H1 (cell line): ENCODE measurements at regions of chr13 and their contacts with region 1.

Region 1: DNA sequence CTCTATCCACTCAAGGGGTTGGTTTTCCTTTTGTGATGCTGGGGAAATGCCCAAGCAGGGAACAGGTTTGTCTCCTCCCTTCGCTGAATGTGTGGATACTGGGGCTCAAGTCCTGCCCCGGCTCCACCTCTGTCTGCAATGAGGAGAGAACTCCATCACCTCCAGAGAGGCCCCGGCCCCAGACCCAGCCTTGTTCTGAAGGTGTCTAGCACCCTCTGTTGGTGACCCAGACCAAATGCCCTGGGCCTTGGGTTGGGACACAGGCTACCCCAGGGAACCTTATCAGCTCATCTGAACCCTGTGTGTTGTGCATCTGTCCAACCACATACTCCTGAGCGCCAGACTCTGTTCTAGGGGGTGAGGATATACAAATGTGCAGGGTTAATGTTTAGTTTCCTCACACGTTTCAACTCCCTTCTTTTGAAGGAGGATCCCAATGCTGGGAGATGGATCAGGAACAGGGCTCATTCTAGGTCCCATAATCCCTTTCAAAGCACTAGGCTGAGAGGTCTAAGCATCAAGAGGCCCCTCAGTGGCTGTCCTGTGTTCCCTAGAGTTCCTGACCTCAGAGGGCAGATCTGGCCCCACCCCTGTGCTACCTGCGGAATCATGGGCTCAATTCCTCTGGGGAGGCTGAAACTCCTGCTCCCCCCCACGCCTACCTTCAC is 112.5 kb upstream of the SLC7A1 start:
- DNase-seq: peak; percentile 59 to 79
- H3K4me3 ChIP-seq: no peak overlapping the region
- H3K27ac ChIP-seq: no peak overlapping the region
- H3K4me1 ChIP-seq: peaks cover 0 to 4% (median 3%) of the 10 kb centered on the region in 4 experiments; a peak in 6 of 7 replicates
- H3K27me3 ChIP-seq: no peaks in the 10 kb centered on the region
- CTCF ChIP-seq: peak; percentile 85 to 94 (median 92)
- EP300 ChIP-seq: no peak
- POLR2A ChIP-seq: no peak
- RAD21 ChIP-seq: peak; percentile 98 to 100

Region 2: DNA sequence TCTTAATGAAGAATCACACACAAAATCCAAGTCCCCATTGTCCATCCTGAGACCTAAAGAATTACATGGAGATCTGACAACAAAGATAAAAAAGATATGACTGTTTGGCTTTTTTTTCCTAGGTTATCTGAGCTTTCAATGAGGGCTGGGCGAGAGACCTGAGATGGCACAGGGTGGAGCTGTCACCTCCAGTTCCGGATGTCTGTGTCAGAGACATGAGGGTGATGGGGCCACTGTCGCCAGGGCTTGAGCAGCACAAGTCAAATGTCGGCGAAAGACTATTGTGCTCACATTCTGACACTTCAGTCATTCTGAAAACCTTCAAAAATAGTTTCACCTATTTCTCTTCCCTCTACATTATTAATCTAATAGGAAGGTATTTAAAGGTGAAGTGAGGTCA is 178.3 kb before region 1 on chr13:
- CTCF ChIA-PET with region 1: interaction called, 12 read pairs
- POLR2A ChIA-PET with region 1: no interaction called
- DNase-seq: no peak
- H3K4me3 ChIP-seq: no peak overlapping the region
- H3K27ac ChIP-seq: no peak overlapping the region
- H3K4me1 ChIP-seq: no peaks in the 10 kb centered on the region
- H3K27me3 ChIP-seq: no peaks in the 10 kb centered on the region
- CTCF ChIP-seq: no peak
- EP300 ChIP-seq: no peak
- POLR2A ChIP-seq: no peak
- RAD21 ChIP-seq: no peak

Region 3: GRCh38 chr13:29598309-29598708 is 109.7 kb before region 1 on chr13:
- CTCF ChIA-PET with region 1: no interaction called
- POLR2A ChIA-PET with region 1: no interaction called
- DNase-seq: no peak
- H3K4me3 ChIP-seq: no peak overlapping the region
- H3K27ac ChIP-seq: no peak overlapping the region
- H3K4me1 ChIP-seq: peaks cover 0 to 6% (median 0%) of the 10 kb centered on the region in 4 experiments; a peak in 1 of 7 replicates
- H3K27me3 ChIP-seq: peaks cover 0 to 2% (median 0%) of the 10 kb centered on the region in 4 experiments; a peak in 1 of 7 replicates
- CTCF ChIP-seq: no peak
- EP300 ChIP-seq: no peak
- POLR2A ChIP-seq: no peak
- RAD21 ChIP-seq: no peak

Region 4: DNA sequence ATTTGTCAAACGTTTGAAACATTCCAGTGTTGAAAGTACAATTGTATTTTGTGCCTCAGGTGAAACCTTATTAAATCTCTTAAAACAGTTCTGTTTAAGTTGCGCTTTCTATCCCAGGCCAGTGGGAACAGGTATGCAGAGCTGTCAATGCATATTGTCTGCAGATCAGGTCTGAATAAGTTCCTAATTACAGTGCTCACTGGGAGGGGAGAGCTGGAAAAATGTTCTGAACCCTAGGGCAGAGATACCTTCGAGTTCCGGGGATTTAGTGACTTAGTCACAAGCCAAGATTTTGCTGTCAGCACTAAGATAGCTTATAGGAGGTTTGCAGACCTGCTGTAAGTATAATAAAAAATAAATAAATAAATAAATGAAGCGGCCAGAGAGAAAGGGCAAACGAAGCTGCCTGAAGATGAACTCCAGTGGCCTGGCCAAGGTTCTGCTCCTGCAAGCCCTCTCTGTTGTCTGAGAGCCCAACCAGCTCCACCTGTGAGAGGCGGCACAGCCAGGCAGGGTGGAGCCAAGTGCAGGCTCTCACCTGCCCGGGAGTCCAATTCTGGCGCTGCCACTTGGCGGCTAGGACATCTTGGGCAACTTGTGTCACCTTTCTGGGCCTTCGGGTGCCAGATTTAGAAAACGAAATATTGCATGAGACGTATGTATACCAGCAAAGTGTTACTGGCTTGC is 14.6 kb before region 1 on chr13:
- CTCF ChIA-PET with region 1: interaction called, 15 read pairs
- POLR2A ChIA-PET with region 1: interaction called, 3 read pairs
- DNase-seq: no peak
- H3K4me3 ChIP-seq: no peak overlapping the region
- H3K27ac ChIP-seq: no peak overlapping the region
- H3K4me1 ChIP-seq: no peaks in the 10 kb centered on the region; a peak in 1 of 7 replicates
- H3K27me3 ChIP-seq: no peaks in the 10 kb centered on the region
- CTCF ChIP-seq: no peak
- EP300 ChIP-seq: no peak
- POLR2A ChIP-seq: no peak
- RAD21 ChIP-seq: no peak

Region 5: GRCh38 chr13:30045916-30046704 is 338.1 kb after region 1 on chr13:
- CTCF ChIA-PET with region 1: no interaction called
- POLR2A ChIA-PET with region 1: no interaction called
- DNase-seq: peak in 1 of 2 experiments; percentile 7
- H3K4me3 ChIP-seq: no peak overlapping the region
- H3K27ac ChIP-seq: no peak overlapping the region
- H3K4me1 ChIP-seq: no peaks in the 10 kb centered on the region; a peak in 1 of 7 replicates
- H3K27me3 ChIP-seq: no peaks in the 10 kb centered on the region; a peak in 1 of 7 replicates
- CTCF ChIP-seq: no peak
- EP300 ChIP-seq: no peak
- POLR2A ChIP-seq: no peak
- RAD21 ChIP-seq: no peak